CD8-positive, alpha-beta T cell (primary cell): ENCODE measurements at regions of chr2 and their contacts with region 1.

Region 1: GRCh38 chr2:54723131-54723995 is at the start of gene EML6:
- DNase-seq: peak; percentile 95 to 99 (median 98)
- ATAC-seq: peak; percentile 95
- H3K4me3 ChIP-seq: peak within 1 kb of the TSS; percentile 70 to 72
- H3K4me3 Mint-ChIP-seq: peak within 1 kb of the TSS; percentile 93
- H3K27ac ChIP-seq: peak within 1 kb of the TSS; percentile 43 to 53
- H3K27ac Mint-ChIP-seq: peak within 1 kb of the TSS; percentile 69
- H3K4me1 ChIP-seq: peaks cover 12% of the 10 kb centered on the region
- H3K4me1 Mint-ChIP-seq: peaks cover 17% of the 10 kb centered on the region
- H3K27me3 ChIP-seq: peaks cover 0 to 11% of the 10 kb centered on the region in 2 experiments
- H3K27me3 Mint-ChIP-seq: peaks cover 27% of the 10 kb centered on the region
- CTCF ChIP-seq: no peak
- total RNA-seq, gene EML6: 0.35 to 0.81 TPM

Region 2: GRCh38 chr2:53786705-53787612 is 936.4 kb before region 1 on chr2 and contains the starts of genes ASB3 and ERLEC1:
- CTCF ChIA-PET with region 1: no interaction called
- POLR2A ChIA-PET with region 1: no interaction called
- intact Hi-C with region 1: loop called (anchors 1 to 5 kb)
- DNase-seq: peak; percentile 78 to 95 (median 90)
- ATAC-seq: peak; percentile 88
- H3K4me3 ChIP-seq: peak within 1 kb of the TSS; percentile 94 to 96
- H3K4me3 Mint-ChIP-seq: peak within 1 kb of the TSS; percentile 95
- H3K27ac ChIP-seq: peak within 1 kb of the TSS; percentile 88 to 89
- H3K27ac Mint-ChIP-seq: peak within 1 kb of the TSS; percentile 95
- H3K4me1 ChIP-seq: peaks cover 30% of the 10 kb centered on the region
- H3K4me1 Mint-ChIP-seq: peaks cover 63% of the 10 kb centered on the region
- H3K27me3 ChIP-seq: no peaks in the 10 kb centered on the region
- H3K27me3 Mint-ChIP-seq: no peaks in the 10 kb centered on the region
- CTCF ChIP-seq: no peak
- total RNA-seq, gene ASB3: 25.0 to 26.2 TPM
- total RNA-seq, gene ERLEC1: 24.1 to 27.1 TPM

Region 3: GRCh38 chr2:54330162-54330925 is 393.0 kb before region 1 on chr2:
- CTCF ChIA-PET with region 1: no interaction called
- POLR2A ChIA-PET with region 1: no interaction called
- intact Hi-C with region 1: loop called in 1 of 2 experiments (anchors 1 kb)
- DNase-seq: peak; percentile 65 to 94 (median 85)
- ATAC-seq: peak; percentile 96
- H3K4me3 ChIP-seq: peak overlapping the region; percentile 58 to 64
- H3K4me3 Mint-ChIP-seq: peak overlapping the region; percentile 88
- H3K27ac ChIP-seq: peak overlapping the region in 1 of 2 experiments; percentile 39
- H3K27ac Mint-ChIP-seq: peak overlapping the region; percentile 52
- H3K4me1 ChIP-seq: peaks cover 11% of the 10 kb centered on the region
- H3K4me1 Mint-ChIP-seq: peaks cover 14% of the 10 kb centered on the region
- H3K27me3 ChIP-seq: no peaks in the 10 kb centered on the region
- H3K27me3 Mint-ChIP-seq: peaks cover 9% of the 10 kb centered on the region
- CTCF ChIP-seq: no peak

Region 4: DNA sequence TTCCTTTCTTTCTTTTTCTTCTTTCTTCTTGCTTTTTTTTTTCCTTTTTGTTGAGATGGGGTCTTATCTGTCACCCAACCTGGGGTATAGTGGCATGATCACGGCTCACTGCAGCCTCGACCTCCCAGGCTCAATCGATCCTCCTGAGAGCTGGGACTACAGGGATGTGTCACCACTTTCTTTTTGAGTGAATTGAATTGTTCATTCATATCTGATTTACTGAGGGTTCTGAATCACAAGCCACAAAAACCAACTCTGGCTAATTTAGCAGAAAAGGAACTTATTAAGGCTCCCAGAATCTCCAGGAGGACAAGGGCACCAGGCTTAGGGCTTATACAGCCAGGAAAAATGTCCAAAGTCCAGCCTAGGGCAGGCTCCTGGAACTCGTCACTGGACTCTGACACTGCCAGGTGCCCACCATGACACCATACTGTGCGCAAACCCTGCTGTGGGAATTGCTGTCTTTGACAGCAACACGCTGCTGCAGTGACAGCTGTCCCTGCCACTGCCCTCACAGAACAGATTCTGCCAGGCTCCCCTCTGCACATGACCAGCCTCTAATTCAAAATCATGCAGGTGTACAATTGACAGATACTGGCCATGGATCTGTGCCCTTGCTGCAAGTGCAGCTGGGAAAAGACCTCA is 42.8 kb before region 1 on chr2:
- CTCF ChIA-PET with region 1: no interaction called
- POLR2A ChIA-PET with region 1: no interaction called
- intact Hi-C with region 1: no loop called
- DNase-seq: no peak
- ATAC-seq: no peak
- H3K4me3 ChIP-seq: no peak overlapping the region
- H3K4me3 Mint-ChIP-seq: no peak overlapping the region
- H3K27ac ChIP-seq: no peak overlapping the region
- H3K27ac Mint-ChIP-seq: no peak overlapping the region
- H3K4me1 ChIP-seq: no peaks in the 10 kb centered on the region
- H3K4me1 Mint-ChIP-seq: peaks cover 16% of the 10 kb centered on the region
- H3K27me3 ChIP-seq: no peaks in the 10 kb centered on the region
- H3K27me3 Mint-ChIP-seq: peaks cover 4% of the 10 kb centered on the region
- CTCF ChIP-seq: no peak

Region 5: GRCh38 chr2:54838585-54839035 is 115.2 kb after region 1 on chr2:
- CTCF ChIA-PET with region 1: interaction called, 3 read pairs
- POLR2A ChIA-PET with region 1: no interaction called
- intact Hi-C with region 1: loop called (anchors 2 to 5 kb)
- DNase-seq: peak; percentile 28 to 75 (median 68)
- ATAC-seq: peak; percentile 80
- H3K4me3 ChIP-seq: no peak overlapping the region
- H3K4me3 Mint-ChIP-seq: no peak overlapping the region
- H3K27ac ChIP-seq: no peak overlapping the region
- H3K27ac Mint-ChIP-seq: no peak overlapping the region
- H3K4me1 ChIP-seq: no peaks in the 10 kb centered on the region
- H3K4me1 Mint-ChIP-seq: no peaks in the 10 kb centered on the region
- H3K27me3 ChIP-seq: no peaks in the 10 kb centered on the region
- H3K27me3 Mint-ChIP-seq: no peaks in the 10 kb centered on the region
- CTCF ChIP-seq: peak; percentile 95

Region 6: GRCh38 chr2:55268907-55269644 is 545.7 kb after region 1 on chr2 and contains the start of gene MTIF2:
- CTCF ChIA-PET with region 1: no interaction called
- POLR2A ChIA-PET with region 1: no interaction called
- intact Hi-C with region 1: loop called in 1 of 2 experiments (anchors 1 kb)
- DNase-seq: peak; percentile 75 to 93 (median 88)
- ATAC-seq: peak; percentile 83
- H3K4me3 ChIP-seq: peak within 1 kb of the TSS; percentile 61 to 67
- H3K4me3 Mint-ChIP-seq: peak within 1 kb of the TSS; percentile 95
- H3K27ac ChIP-seq: peak within 1 kb of the TSS; percentile 59 to 66
- H3K27ac Mint-ChIP-seq: peak within 1 kb of the TSS; percentile 96
- H3K4me1 ChIP-seq: peaks cover 4% of the 10 kb centered on the region
- H3K4me1 Mint-ChIP-seq: peaks cover 26% of the 10 kb centered on the region
- H3K27me3 ChIP-seq: peaks cover 0 to 2% of the 10 kb centered on the region in 2 experiments
- H3K27me3 Mint-ChIP-seq: no peaks in the 10 kb centered on the region
- CTCF ChIP-seq: no peak
- total RNA-seq, gene MTIF2: 12.2 to 14.4 TPM

Region 7: GRCh38 chr2:55617175-55618024 is 894.0 kb after region 1 on chr2 and contains the start of gene PPP4R3B:
- CTCF ChIA-PET with region 1: no interaction called
- POLR2A ChIA-PET with region 1: interaction called, 3 read pairs
- intact Hi-C with region 1: loop called (anchors 1 to 5 kb)
- DNase-seq: peak; percentile 96 to 100 (median 98)
- ATAC-seq: peak; percentile 83
- H3K4me3 ChIP-seq: peak within 1 kb of the TSS; percentile 95 to 97
- H3K4me3 Mint-ChIP-seq: no peak within 1 kb of the TSS
- H3K27ac ChIP-seq: peak within 1 kb of the TSS; percentile 97 to 99
- H3K27ac Mint-ChIP-seq: no peak within 1 kb of the TSS
- H3K4me1 ChIP-seq: peaks cover 50% of the 10 kb centered on the region
- H3K4me1 Mint-ChIP-seq: peaks cover 63% of the 10 kb centered on the region
- H3K27me3 ChIP-seq: no peaks in the 10 kb centered on the region
- H3K27me3 Mint-ChIP-seq: no peaks in the 10 kb centered on the region
- CTCF ChIP-seq: peak; percentile 21
- total RNA-seq, gene PPP4R3B: 39.0 to 43.9 TPM